HepG2 (cell line): ENCODE measurements at regions of chr17 and their contacts with region 1.

Region 1: GRCh38 chr17:76506408-76507349 is 5.5 kb upstream of the RHBDF2 start:
- DNase-seq: peak; percentile 69
- ATAC-seq: peak; percentile 74
- H3K4me3 ChIP-seq: peak overlapping the region in 2 of 3 experiments; percentile 27 to 73; a peak in 4 of 6 replicates
- H3K27ac ChIP-seq: no peak overlapping the region
- H3K4me1 ChIP-seq: peaks cover 56% of the 10 kb centered on the region
- H3K27me3 ChIP-seq: peaks cover 0 to 16% of the 10 kb centered on the region in 2 experiments; a peak in 4 of 5 replicates
- CTCF ChIP-seq: peak; percentile 100
- EP300 ChIP-seq: no peak
- POLR2A ChIP-seq: no peak
- RAD21 ChIP-seq: peak; percentile 99

Region 2: DNA sequence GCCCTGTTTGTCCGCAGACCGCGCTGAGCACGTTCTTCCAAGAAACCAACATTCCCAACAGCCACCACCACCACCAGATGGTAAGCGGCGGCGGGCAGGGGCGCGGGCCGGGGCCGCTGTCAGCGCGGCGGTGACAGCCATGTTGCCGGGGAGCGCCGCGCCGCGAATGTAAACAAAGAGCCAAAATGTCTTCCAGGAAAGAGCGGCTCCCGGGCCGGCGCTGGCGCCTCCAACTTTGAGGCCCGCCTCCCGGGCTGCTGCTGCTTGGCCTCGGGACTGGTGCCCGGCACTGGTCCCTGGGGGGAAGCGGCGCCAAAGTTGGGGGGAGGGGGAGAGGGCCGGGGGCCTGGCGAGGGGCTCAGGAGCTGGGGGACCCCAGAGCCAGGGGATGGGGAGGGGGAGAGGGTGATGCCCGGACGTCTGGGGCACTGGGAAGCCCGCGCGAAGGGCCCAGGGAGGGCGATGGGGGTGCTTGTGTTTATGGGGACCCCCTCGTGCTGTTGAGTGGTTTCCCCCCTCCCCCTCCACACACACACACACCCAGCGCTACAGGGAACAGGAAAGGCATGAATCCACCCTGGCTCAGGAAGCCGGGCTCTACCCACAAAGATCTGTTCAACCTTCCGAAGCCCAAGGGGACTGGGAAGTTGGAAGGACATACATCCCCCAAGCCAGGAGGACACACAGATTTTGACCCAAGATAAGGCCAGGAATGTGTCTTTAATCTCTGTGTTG is 240.6 kb before region 1 on chr17:
- CTCF ChIA-PET with region 1: no interaction called
- POLR2A ChIA-PET with region 1: no interaction called
- in situ Hi-C with region 1: no loop called
- intact Hi-C with region 1: no loop called
- DNase-seq: no peak
- ATAC-seq: peak; percentile 15
- H3K4me3 ChIP-seq: peak overlapping the region; percentile 88 to 98 (median 92)
- H3K27ac ChIP-seq: peak overlapping the region; percentile 63
- H3K4me1 ChIP-seq: peaks cover 70% of the 10 kb centered on the region
- H3K27me3 ChIP-seq: no peaks in the 10 kb centered on the region
- CTCF ChIP-seq: no peak; the same call in 1 of the 2 replicates
- EP300 ChIP-seq: no peak
- POLR2A ChIP-seq: 0 out of 4 replicates have a peak, but pooled peaks of 1 of the 2 experiments have one; percentile 34
- RAD21 ChIP-seq: peak; percentile 49

Region 3: GRCh38 chr17:76408052-76408849 is 98.4 kb before region 1 on chr17:
- CTCF ChIA-PET with region 1: interaction called, 11 read pairs
- POLR2A ChIA-PET with region 1: no interaction called
- in situ Hi-C with region 1: loop called (anchors 5 kb)
- intact Hi-C with region 1: loop called (anchors 1 kb)
- DNase-seq: peak; percentile 62
- ATAC-seq: peak; percentile 83
- H3K4me3 ChIP-seq: no peak overlapping the region
- H3K27ac ChIP-seq: peak overlapping the region; percentile 24
- H3K4me1 ChIP-seq: peaks cover 20% of the 10 kb centered on the region
- H3K27me3 ChIP-seq: no peaks in the 10 kb centered on the region
- CTCF ChIP-seq: peak; percentile 97
- EP300 ChIP-seq: no peak
- POLR2A ChIP-seq: no peak
- RAD21 ChIP-seq: peak; percentile 87

Region 4: GRCh38 chr17:76458580-76459490 is 47.8 kb before region 1 on chr17:
- CTCF ChIA-PET with region 1: interaction called, 20 read pairs
- POLR2A ChIA-PET with region 1: interaction called, 26 read pairs
- in situ Hi-C with region 1: no loop called
- intact Hi-C with region 1: loop called (anchors 1 kb)
- DNase-seq: peak; percentile 71
- ATAC-seq: peak; percentile 92
- H3K4me3 ChIP-seq: no peak overlapping the region
- H3K27ac ChIP-seq: no peak overlapping the region
- H3K4me1 ChIP-seq: peaks cover 45% of the 10 kb centered on the region
- H3K27me3 ChIP-seq: peaks cover 10 to 28% of the 10 kb centered on the region in 2 experiments; a peak in 4 of 5 replicates
- CTCF ChIP-seq: peak; percentile 86
- EP300 ChIP-seq: no peak
- POLR2A ChIP-seq: no peak
- RAD21 ChIP-seq: peak; percentile 81

Region 5: GRCh38 chr17:76467366-76467765 is 39.3 kb before region 1 on chr17 and contains the start of gene AANAT:
- CTCF ChIA-PET with region 1: interaction called, 86 read pairs
- POLR2A ChIA-PET with region 1: interaction called, 31 read pairs
- in situ Hi-C with region 1: loop called (anchors 5 kb)
- intact Hi-C with region 1: loop called (anchors 1 kb)
- DNase-seq: no peak
- ATAC-seq: no peak
- H3K4me3 ChIP-seq: 0 out of 6 replicates have a peak within 1 kb of the TSS, but pooled peaks of 1 of the 3 experiments have one; percentile 63
- H3K27ac ChIP-seq: no peak within 1 kb of the TSS
- H3K4me1 ChIP-seq: peaks cover 48% of the 10 kb centered on the region
- H3K27me3 ChIP-seq: peaks cover 2 to 21% of the 10 kb centered on the region in 2 experiments; a peak in 3 of 5 replicates
- CTCF ChIP-seq: no peak
- EP300 ChIP-seq: no peak
- POLR2A ChIP-seq: no peak
- RAD21 ChIP-seq: no peak
- total RNA-seq, gene AANAT: not detected in 2 replicates

Region 6: DNA sequence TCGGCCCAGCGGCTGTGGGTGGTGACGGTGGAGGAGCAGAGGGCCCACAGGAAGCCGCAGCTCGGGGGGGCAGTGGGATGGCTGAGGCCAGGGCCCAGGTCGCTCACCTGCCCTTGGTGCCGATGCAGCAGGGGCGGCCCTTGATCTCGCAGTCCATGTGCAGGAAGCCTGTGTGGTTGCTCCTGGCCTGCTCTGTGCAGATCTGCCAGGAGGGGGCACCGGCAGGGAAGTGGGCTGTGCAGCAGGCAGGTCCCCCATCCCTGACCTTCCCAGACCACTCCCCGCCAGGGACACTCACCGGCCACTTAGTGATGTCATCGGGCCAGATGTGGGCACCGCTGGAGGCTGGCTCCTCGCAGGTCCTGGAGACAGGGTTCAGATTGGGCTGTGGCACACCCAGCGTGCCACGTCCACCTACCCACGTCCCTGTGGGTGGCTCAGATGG is 33.1 kb before region 1 on chr17:
- CTCF ChIA-PET with region 1: interaction called, 86 read pairs
- POLR2A ChIA-PET with region 1: interaction called, 59 read pairs
- in situ Hi-C with region 1: loop called (anchors 5 kb)
- intact Hi-C with region 1: no loop called
- DNase-seq: no peak
- ATAC-seq: peak; percentile 80
- H3K4me3 ChIP-seq: no peak overlapping the region
- H3K27ac ChIP-seq: no peak overlapping the region
- H3K4me1 ChIP-seq: peaks cover 19% of the 10 kb centered on the region
- H3K27me3 ChIP-seq: no peaks in the 10 kb centered on the region
- CTCF ChIP-seq: peak; percentile 78
- EP300 ChIP-seq: no peak
- POLR2A ChIP-seq: no peak
- RAD21 ChIP-seq: peak; percentile 82

Region 7: GRCh38 chr17:76612977-76613851 is 106.5 kb after region 1 on chr17:
- CTCF ChIA-PET with region 1: no interaction called
- POLR2A ChIA-PET with region 1: no interaction called
- in situ Hi-C with region 1: no loop called
- intact Hi-C with region 1: no loop called
- DNase-seq: peak; percentile 94
- ATAC-seq: peak; percentile 95
- H3K4me3 ChIP-seq: peak overlapping the region; percentile 17 to 70 (median 32)
- H3K27ac ChIP-seq: peak overlapping the region; percentile 57
- H3K4me1 ChIP-seq: peaks cover 34% of the 10 kb centered on the region
- H3K27me3 ChIP-seq: peaks cover 0 to 6% of the 10 kb centered on the region in 2 experiments; a peak in 1 of 5 replicates
- CTCF ChIP-seq: peak; percentile 71
- EP300 ChIP-seq: no peak
- POLR2A ChIP-seq: no peak
- RAD21 ChIP-seq: peak; percentile 57